Stomach (tissue), 19 donors: ENCODE measurements at regions of chr1 and their contacts with region 1.

Region 1: DNA sequence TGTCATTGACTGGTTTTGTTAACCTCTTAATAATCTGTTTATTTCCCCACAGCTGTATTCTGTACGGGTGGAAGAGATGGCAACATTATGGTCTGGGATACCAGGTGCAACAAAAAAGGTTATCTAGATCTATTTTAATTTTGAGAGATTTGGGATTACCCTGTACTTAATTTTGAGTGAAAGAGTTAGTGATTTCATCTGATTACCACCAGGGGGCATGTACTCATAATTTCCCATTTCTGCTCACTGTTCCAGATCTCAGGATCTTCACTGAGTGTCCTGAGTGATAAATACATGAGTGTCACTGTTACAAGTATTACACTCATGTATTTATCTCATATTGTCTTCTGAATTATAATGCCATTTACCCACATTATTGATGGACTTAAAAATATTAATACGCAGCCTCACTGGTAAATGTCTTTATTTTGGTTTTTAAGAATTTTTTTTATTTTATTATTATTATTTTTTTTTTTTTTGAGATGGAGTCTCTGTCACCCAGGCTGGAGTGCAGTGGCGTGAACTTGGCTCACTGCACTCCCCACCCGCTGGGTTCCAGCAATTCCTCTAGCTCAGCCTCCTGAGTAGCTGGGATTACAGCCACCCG is 27.4 kb downstream of the DTL start:
- DNase-seq: peak in 1 of 2 donors; percentile 40
- H3K4me3 ChIP-seq: no peak overlapping the region
- H3K27ac ChIP-seq: no peak overlapping the region
- H3K4me1 ChIP-seq: peaks cover 0 to 4% (median 0%) of the 10 kb centered on the region in 4 donors
- H3K27me3 ChIP-seq: no peaks in the 10 kb centered on the region
- CTCF ChIP-seq: peak in 5 of 7 experiments; percentile 26 to 75 (median 59)
- EP300 ChIP-seq: no peak
- POLR2A ChIP-seq: no peak

Region 2: GRCh38 chr1:211928993-211929637 is 133.8 kb before region 1 on chr1:
- intact Hi-C with region 1: no loop called
- DNase-seq: peak; percentile 51 to 90
- H3K4me3 ChIP-seq: no peak overlapping the region
- H3K27ac ChIP-seq: peak overlapping the region; percentile 5 to 89 (median 55)
- H3K4me1 ChIP-seq: peaks cover 12 to 21% (median 19%) of the 10 kb centered on the region in 4 donors
- H3K27me3 ChIP-seq: peaks cover 0 to 15% (median 0%) of the 10 kb centered on the region in 3 donors
- CTCF ChIP-seq: no peak
- EP300 ChIP-seq: no peak
- POLR2A ChIP-seq: no peak

Region 3: GRCh38 chr1:212291505-212292134 is 228.7 kb after region 1 on chr1:
- intact Hi-C with region 1: loop called (anchors 10 kb)
- DNase-seq: peak in 1 of 2 donors; percentile 81
- H3K4me3 ChIP-seq: no peak overlapping the region
- H3K27ac ChIP-seq: peak overlapping the region in 4 of 5 donors; percentile 10 to 20 (median 18)
- H3K4me1 ChIP-seq: peaks cover 16 to 97% (median 59%) of the 10 kb centered on the region in 4 donors
- H3K27me3 ChIP-seq: no peaks in the 10 kb centered on the region
- CTCF ChIP-seq: peak in 5 of 7 experiments; percentile 34 to 83 (median 49)
- EP300 ChIP-seq: no peak
- POLR2A ChIP-seq: no peak

Region 4: GRCh38 chr1:212368073-212368484 is 305.1 kb after region 1 on chr1:
- intact Hi-C with region 1: loop called (anchors 5 kb)
- DNase-seq: peak; percentile 64 to 80
- H3K4me3 ChIP-seq: no peak overlapping the region
- H3K27ac ChIP-seq: no peak overlapping the region
- H3K4me1 ChIP-seq: peaks cover 0 to 5% (median 0%) of the 10 kb centered on the region in 4 donors
- H3K27me3 ChIP-seq: no peaks in the 10 kb centered on the region
- CTCF ChIP-seq: peak in 5 of 7 experiments; percentile 60 to 76 (median 74)
- EP300 ChIP-seq: no peak
- POLR2A ChIP-seq: no peak